ENCODE measurements at regions of chr18 and their contacts with region 1.

Region 1: DNA sequence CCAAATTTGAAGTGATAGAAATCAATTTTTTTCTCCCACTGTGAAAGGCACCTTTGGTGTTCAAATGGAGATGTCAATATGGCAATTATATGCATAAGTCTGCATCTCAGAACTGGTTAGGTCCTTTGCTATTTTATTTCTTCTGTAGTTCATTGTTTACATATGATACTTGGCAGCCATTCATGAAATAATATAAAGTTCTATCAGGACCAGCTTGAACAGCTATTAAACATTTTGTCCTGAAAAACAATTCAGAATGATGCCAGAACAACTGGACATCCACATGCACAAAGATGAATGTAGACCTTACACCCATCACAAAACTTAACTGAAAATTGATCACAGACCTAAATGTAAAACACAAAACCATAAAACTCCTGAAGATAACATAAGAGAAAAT is 41.8 kb upstream of the ARHGAP28 start:
- DNase-seq: no peak
- H3K4me3 ChIP-seq: no peak overlapping the region
- H3K27ac ChIP-seq: no peak overlapping the region
- H3K4me1 ChIP-seq: no peaks in the 10 kb centered on the region
- H3K27me3 ChIP-seq: no peaks in the 10 kb centered on the region
- CTCF ChIP-seq: no peak

Region 2: GRCh38 chr18:6150430-6150829 is 537.2 kb before region 1 on chr18:
- intact Hi-C with region 1: no loop called
- DNase-seq: no peak
- H3K4me3 ChIP-seq: no peak overlapping the region
- H3K27ac ChIP-seq: no peak overlapping the region
- H3K4me1 ChIP-seq: no peaks in the 10 kb centered on the region
- H3K27me3 ChIP-seq: no peaks in the 10 kb centered on the region
- CTCF ChIP-seq: no peak

Region 3: GRCh38 chr18:6221602-6222014 is 466.1 kb before region 1 on chr18:
- intact Hi-C with region 1: loop called (anchors 5 kb)
- DNase-seq: no peak
- H3K4me3 ChIP-seq: no peak overlapping the region
- H3K27ac ChIP-seq: no peak overlapping the region
- H3K4me1 ChIP-seq: no peaks in the 10 kb centered on the region
- H3K27me3 ChIP-seq: no peaks in the 10 kb centered on the region
- CTCF ChIP-seq: no peak

Measured in tibial artery (tissue), 4 donors.